HAP-1 (cell line): ENCODE measurements at regions of chr3 and their contacts with region 1.

Region 1: DNA sequence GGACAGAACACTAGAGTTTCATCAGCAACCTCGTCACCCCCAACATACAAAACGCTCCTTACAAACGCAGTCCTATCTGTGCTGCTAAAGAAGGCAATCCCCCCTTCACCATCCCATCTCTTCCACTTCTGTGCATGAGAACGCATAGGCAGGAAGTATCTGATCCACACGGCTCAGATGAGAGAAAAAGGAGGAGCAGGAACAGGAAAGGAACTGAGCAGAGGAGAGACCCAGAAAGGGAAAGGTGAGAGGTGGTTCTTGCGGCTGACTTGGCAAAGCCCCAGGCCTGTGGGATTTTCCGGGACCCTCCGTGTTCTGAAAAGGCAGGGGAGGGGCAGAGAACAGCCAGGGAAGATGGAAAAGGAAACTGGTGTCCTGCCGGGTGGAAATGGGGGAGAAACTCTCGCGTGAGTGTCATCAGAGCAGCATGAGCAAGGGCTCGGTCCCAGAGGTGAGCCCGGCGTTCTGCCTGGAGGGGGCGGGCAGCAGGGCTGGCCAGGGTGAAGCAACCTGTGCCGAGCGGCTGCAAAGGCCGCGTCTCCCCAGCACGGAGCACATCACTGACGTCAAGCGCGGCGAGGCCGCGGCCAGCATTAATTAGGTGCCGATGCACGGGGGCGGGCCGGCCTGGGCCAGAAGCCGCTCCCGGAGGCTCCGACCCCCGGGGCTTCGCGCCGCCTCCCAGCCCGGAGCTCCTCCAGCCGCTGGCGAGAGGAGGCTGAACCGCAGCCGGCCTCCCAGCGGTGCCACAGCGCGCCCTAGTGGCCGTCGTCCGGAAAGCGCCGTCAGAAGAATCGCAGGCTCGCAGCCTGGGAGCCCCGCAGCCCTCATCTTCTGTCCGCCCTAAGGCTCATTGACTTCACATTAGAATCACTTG is 35.8 kb downstream of the CPN2 start:
- DNase-seq: peak; percentile 69 to 91
- H3K4me3 ChIP-seq: peak overlapping the region; percentile 25
- H3K4me1 ChIP-seq: peaks cover 15% of the 10 kb centered on the region
- H3K27me3 ChIP-seq: no peaks in the 10 kb centered on the region

Region 2: GRCh38 chr3:193665370-193665989 is 649.8 kb before region 1 on chr3:
- in situ Hi-C with region 1: loop called (anchors 25 kb)
- DNase-seq: no peak
- H3K4me3 ChIP-seq: no peak overlapping the region
- H3K4me1 ChIP-seq: no peaks in the 10 kb centered on the region
- H3K27me3 ChIP-seq: no peaks in the 10 kb centered on the region

Region 3: DNA sequence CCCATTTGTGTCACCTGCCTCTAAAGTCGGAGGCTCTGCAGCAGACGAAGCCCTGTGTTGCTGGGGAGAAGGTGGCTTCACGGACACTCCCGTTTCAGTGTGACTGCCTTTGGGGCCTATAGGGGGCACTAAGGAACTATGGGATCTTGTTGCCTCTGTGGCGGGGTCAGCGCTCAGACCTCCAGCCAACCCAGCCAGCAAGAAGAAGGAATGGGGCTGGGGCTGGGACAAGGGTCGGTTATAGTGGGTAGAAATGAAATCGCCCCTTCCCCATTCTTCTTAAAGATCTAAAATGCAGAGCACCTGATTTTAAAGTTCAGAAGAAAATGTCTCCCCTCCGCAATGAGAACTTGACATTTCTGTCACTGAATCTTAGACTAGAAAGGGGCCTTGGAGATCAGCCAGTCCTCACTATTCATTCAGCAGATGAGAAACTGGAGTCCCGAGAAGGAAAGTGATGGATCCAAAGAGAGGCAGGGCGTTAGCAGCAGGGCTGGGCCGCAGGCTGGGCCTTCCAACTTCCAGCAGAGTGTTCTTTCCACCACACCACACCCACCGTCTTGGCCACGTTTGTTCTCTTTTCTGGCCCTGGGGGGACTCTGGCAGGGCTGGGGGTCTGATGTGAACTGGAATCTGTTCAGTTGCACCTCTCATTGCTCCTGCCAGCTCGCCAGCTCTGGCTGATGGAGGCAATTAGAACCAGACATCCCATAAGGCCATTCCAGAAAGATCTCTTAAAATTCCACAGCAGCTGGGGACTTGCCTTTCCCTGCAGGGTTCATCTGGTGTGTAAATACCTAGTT is 526.9 kb before region 1 on chr3:
- in situ Hi-C with region 1: loop called (anchors 5 kb)
- DNase-seq: peak; percentile 73 to 75
- H3K4me3 ChIP-seq: no peak overlapping the region
- H3K4me1 ChIP-seq: peaks cover 3% of the 10 kb centered on the region; the same call in 1 of the 2 replicates
- H3K27me3 ChIP-seq: no peaks in the 10 kb centered on the region

Region 4: DNA sequence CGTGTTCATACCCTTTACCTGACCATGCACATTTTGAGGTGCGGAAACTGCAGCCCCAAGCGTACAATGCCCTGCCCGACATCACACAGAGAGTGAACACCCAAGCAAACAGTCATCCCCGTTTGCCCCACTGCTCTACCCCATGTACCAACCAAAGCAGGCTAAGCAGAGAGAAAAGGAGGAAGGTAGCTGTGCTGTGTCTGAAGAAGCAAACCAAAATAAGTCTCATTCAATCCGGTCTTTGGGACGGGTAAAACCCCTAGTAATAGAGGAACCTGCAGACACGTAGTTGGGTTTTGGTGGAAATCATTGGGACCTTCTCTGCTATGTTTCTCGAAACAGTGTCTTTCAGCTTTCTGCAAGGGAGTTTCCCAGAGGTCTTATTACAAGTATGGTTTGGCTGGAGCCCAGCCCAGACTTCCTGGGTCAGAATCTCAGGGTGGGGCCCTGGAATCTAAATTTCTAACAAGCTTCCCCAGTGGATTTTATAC is 344.0 kb before region 1 on chr3:
- in situ Hi-C with region 1: loop called (anchors 25 kb)
- DNase-seq: no peak
- H3K4me3 ChIP-seq: no peak overlapping the region
- H3K4me1 ChIP-seq: peaks cover 13% of the 10 kb centered on the region
- H3K27me3 ChIP-seq: no peaks in the 10 kb centered on the region

Region 5: GRCh38 chr3:194134757-194135528 is 180.4 kb before region 1 on chr3:
- in situ Hi-C with region 1: loop called (anchors 10 kb)
- DNase-seq: peak; percentile 90 to 96
- H3K4me3 ChIP-seq: peak overlapping the region; percentile 48
- H3K4me1 ChIP-seq: peaks cover 51% of the 10 kb centered on the region
- H3K27me3 ChIP-seq: no peaks in the 10 kb centered on the region